ENCODE measurements at regions of chr5 and their contacts with region 1.

Region 1: DNA sequence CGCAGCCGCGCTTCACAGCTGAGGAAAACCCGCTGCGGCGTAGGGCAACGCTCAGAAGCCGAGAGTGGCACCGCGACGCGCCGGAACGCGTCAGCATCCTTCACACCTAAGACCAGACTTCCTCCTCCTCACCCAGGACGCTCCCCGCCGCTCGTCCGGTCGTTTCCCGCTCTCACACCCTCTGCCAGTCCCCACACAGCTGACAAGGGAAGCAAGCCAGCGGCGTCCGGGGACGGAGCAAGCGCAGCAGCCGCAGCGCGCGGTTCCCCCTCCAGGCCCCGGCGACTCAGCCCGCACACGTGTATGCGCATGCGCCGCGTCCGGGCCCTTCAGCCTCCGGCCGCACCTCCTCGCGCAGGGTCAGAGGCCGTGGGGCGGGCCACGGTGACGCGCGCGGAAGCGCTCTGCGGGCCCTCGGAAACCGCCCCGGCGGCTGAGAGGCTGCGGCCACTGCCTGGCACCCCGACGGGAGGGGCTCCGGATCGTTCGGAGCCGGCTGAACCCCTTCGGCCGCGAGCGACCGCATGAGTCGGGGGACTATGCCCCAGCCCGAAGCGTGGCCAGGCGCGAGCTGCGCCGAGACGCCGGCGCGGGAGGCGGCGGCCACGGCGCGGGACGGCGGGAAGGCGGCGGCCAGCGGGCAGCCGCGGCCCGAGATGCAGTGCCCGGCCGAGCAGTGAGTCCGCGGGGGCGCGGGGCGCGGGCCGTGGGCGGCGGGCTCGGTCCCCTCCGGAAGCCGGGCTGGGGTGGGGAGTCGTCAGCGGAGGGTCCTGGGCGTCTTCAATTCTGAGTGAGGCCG is at the start of gene OTULIN:
- DNase-seq: peak; percentile 73 to 92 (median 75)
- ATAC-seq: peak; percentile 85
- H3K4me3 ChIP-seq: peak within 1 kb of the TSS; percentile 86
- H3K4me3 Mint-ChIP-seq: peak within 1 kb of the TSS; percentile 87 to 97 (median 96)
- H3K27ac ChIP-seq: peak within 1 kb of the TSS; percentile 79
- H3K27ac Mint-ChIP-seq: peak within 1 kb of the TSS; percentile 89 to 98 (median 96)
- H3K4me1 ChIP-seq: peaks cover 25 to 38% of the 10 kb centered on the region in 2 donors
- H3K4me1 Mint-ChIP-seq: peaks cover 30 to 73% (median 67%) of the 10 kb centered on the region in 7 donors
- H3K27me3 ChIP-seq: no peaks in the 10 kb centered on the region
- H3K27me3 Mint-ChIP-seq: no peaks in the 10 kb centered on the region
- total RNA-seq, gene OTULIN: 48.3 to 66.9 (median 58.2) TPM

Region 2: GRCh38 chr5:14415024-14415697 is 249.3 kb before region 1 on chr5:
- CTCF ChIA-PET with region 1: no interaction called
- POLR2A ChIA-PET with region 1: no interaction called
- intact Hi-C with region 1: loop called in 1 of 2 experiments (anchors 5 kb)
- DNase-seq: no peak
- ATAC-seq: no peak
- H3K4me3 ChIP-seq: peak overlapping the region; percentile 17
- H3K4me3 Mint-ChIP-seq: peak overlapping the region in 7 of 10 donors; percentile 57 to 87 (median 73)
- H3K27ac ChIP-seq: no peak overlapping the region
- H3K27ac Mint-ChIP-seq: peak overlapping the region; percentile 89 to 97 (median 94)
- H3K4me1 ChIP-seq: peaks cover 31 to 32% of the 10 kb centered on the region in 2 donors
- H3K4me1 Mint-ChIP-seq: peaks cover 26 to 52% (median 40%) of the 10 kb centered on the region in 7 donors
- H3K27me3 ChIP-seq: no peaks in the 10 kb centered on the region
- H3K27me3 Mint-ChIP-seq: no peaks in the 10 kb centered on the region

Region 3: GRCh38 chr5:14492331-14493272 is 171.9 kb before region 1 on chr5:
- CTCF ChIA-PET with region 1: no interaction called
- POLR2A ChIA-PET with region 1: no interaction called
- intact Hi-C with region 1: no loop called
- DNase-seq: no peak
- ATAC-seq: peak; percentile 58
- H3K4me3 ChIP-seq: no peak overlapping the region
- H3K4me3 Mint-ChIP-seq: no peak overlapping the region
- H3K27ac ChIP-seq: no peak overlapping the region
- H3K27ac Mint-ChIP-seq: peak overlapping the region in 1 of 9 donors; percentile 7
- H3K4me1 ChIP-seq: no peaks in the 10 kb centered on the region
- H3K4me1 Mint-ChIP-seq: peaks cover 0 to 7% (median 3%) of the 10 kb centered on the region in 7 donors
- H3K27me3 ChIP-seq: no peaks in the 10 kb centered on the region
- H3K27me3 Mint-ChIP-seq: no peaks in the 10 kb centered on the region

Region 4: GRCh38 chr5:14675865-14676300 is 11.4 kb after region 1 on chr5:
- CTCF ChIA-PET with region 1: interaction called, 5 read pairs
- POLR2A ChIA-PET with region 1: interaction called, 9 read pairs
- intact Hi-C with region 1: loop called (anchors 1 kb)
- DNase-seq: no peak
- ATAC-seq: peak; percentile 58
- H3K4me3 ChIP-seq: peak overlapping the region; percentile 12
- H3K4me3 Mint-ChIP-seq: peak overlapping the region in 9 of 10 donors; percentile 26 to 62 (median 51)
- H3K27ac ChIP-seq: peak overlapping the region; percentile 59
- H3K27ac Mint-ChIP-seq: peak overlapping the region; percentile 66 to 95 (median 83)
- H3K4me1 ChIP-seq: peaks cover 24 to 52% of the 10 kb centered on the region in 2 donors
- H3K4me1 Mint-ChIP-seq: peaks cover 47 to 76% (median 66%) of the 10 kb centered on the region in 7 donors
- H3K27me3 ChIP-seq: no peaks in the 10 kb centered on the region
- H3K27me3 Mint-ChIP-seq: no peaks in the 10 kb centered on the region

Region 5: GRCh38 chr5:14809369-14810155 is 145.1 kb after region 1 on chr5:
- CTCF ChIA-PET with region 1: no interaction called
- POLR2A ChIA-PET with region 1: no interaction called
- intact Hi-C with region 1: loop called in 1 of 2 experiments (anchors 10 kb)
- DNase-seq: peak; percentile 16 to 74 (median 57)
- ATAC-seq: peak; percentile 94
- H3K4me3 ChIP-seq: peak overlapping the region; percentile 21
- H3K4me3 Mint-ChIP-seq: peak overlapping the region; percentile 56 to 87 (median 78)
- H3K27ac ChIP-seq: peak overlapping the region; percentile 50
- H3K27ac Mint-ChIP-seq: peak overlapping the region; percentile 72 to 93 (median 91)
- H3K4me1 ChIP-seq: peaks cover 38 to 42% of the 10 kb centered on the region in 2 donors
- H3K4me1 Mint-ChIP-seq: peaks cover 40 to 85% (median 63%) of the 10 kb centered on the region in 7 donors
- H3K27me3 ChIP-seq: no peaks in the 10 kb centered on the region
- H3K27me3 Mint-ChIP-seq: no peaks in the 10 kb centered on the region

Region 6: GRCh38 chr5:16471387-16471786 is 1806.9 kb after region 1 on chr5:
- CTCF ChIA-PET with region 1: no interaction called
- POLR2A ChIA-PET with region 1: no interaction called
- intact Hi-C with region 1: loop called (anchors 5 to 10 kb)
- DNase-seq: no peak
- ATAC-seq: no peak
- H3K4me3 ChIP-seq: no peak overlapping the region
- H3K4me3 Mint-ChIP-seq: no peak overlapping the region
- H3K27ac ChIP-seq: peak overlapping the region; percentile 41
- H3K27ac Mint-ChIP-seq: peak overlapping the region in 7 of 9 donors; percentile 18 to 78 (median 40)
- H3K4me1 ChIP-seq: peaks cover 12 to 18% of the 10 kb centered on the region in 2 donors
- H3K4me1 Mint-ChIP-seq: peaks cover 25 to 78% (median 56%) of the 10 kb centered on the region in 7 donors
- H3K27me3 ChIP-seq: no peaks in the 10 kb centered on the region
- H3K27me3 Mint-ChIP-seq: no peaks in the 10 kb centered on the region

Region 7: DNA sequence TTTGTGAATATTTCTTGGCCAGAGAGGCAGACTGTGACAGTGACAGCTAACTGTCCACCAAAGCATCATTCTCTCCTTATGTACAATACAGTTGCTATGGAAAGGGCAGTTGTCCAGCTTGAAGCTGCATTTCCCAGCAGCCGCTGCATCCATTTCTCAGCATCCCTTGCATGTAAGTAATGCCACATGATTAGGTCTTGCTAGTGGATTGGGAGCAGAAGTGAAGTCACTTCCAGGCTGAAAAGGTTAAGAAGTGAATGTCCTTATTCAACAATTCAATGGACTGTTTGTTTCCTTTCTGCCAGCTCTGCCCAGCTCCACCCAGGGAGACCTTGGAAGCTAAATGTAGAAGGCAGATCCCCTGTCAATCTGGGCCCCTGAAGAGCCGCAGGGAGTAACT is 1978.4 kb after region 1 on chr5:
- CTCF ChIA-PET with region 1: no interaction called
- POLR2A ChIA-PET with region 1: no interaction called
- intact Hi-C with region 1: no loop called
- DNase-seq: no peak
- ATAC-seq: no peak
- H3K4me3 ChIP-seq: no peak overlapping the region
- H3K4me3 Mint-ChIP-seq: peak overlapping the region in 1 of 10 donors; percentile 29
- H3K27ac ChIP-seq: no peak overlapping the region
- H3K27ac Mint-ChIP-seq: peak overlapping the region in 3 of 9 donors; percentile 11 to 80 (median 59)
- H3K4me1 ChIP-seq: peaks cover 0 to 12% of the 10 kb centered on the region in 2 donors
- H3K4me1 Mint-ChIP-seq: peaks cover 6 to 50% (median 23%) of the 10 kb centered on the region in 7 donors
- H3K27me3 ChIP-seq: no peaks in the 10 kb centered on the region
- H3K27me3 Mint-ChIP-seq: no peaks in the 10 kb centered on the region